Body of pancreas (tissue), 4 donors: ENCODE measurements at regions of chr3 and their contacts with region 1.

Region 1: GRCh38 chr3:42229942-42230688 is 35.9 kb downstream of the CCK start:
- DNase-seq: no peak
- ATAC-seq: no peak
- H3K4me3 ChIP-seq: no peak overlapping the region
- H3K27ac ChIP-seq: no peak overlapping the region
- H3K4me1 ChIP-seq: no peaks in the 10 kb centered on the region
- H3K27me3 ChIP-seq: no peaks in the 10 kb centered on the region
- CTCF ChIP-seq: peak in 6 of 7 experiments; percentile 21 to 58 (median 48)
- POLR2A ChIP-seq: no peak

Region 2: DNA sequence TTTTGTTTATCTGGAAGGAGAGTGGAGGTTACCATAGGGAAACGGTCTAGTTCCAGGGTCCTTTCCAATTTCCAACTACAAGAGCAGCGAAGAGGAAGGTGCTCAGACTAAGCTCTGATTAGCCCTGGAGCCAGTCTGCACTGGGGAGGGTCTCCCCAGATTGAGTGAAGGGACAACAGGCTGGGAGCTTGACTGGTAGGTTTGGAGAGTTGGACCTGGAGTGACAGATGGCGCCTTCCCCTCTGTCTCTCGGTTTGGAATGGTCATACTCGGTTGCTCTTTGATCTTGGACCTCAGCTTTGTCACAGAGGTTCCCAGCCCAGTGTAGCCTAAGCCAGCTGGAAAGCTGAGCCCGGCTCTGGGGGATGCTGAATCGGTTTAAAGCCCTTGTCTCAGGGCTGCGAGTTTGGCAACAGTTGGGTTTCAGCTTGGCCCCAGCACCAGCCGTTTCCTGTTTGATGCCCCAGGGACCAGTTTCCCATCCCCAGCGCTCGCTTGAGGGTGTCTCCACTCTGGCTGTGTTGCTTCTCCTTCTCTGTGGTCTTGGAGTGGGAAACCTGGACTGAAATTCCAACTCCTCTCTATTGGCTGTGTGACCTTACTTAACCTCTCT is 215.1 kb before region 1 on chr3:
- intact Hi-C with region 1: no loop called
- DNase-seq: peak; percentile 25 to 46 (median 40)
- ATAC-seq: no peak
- H3K4me3 ChIP-seq: no peak overlapping the region
- H3K27ac ChIP-seq: peak overlapping the region in 3 of 4 donors; percentile 70 to 91 (median 90)
- H3K4me1 ChIP-seq: peaks cover 35% of the 10 kb centered on the region
- H3K27me3 ChIP-seq: no peaks in the 10 kb centered on the region
- CTCF ChIP-seq: no peak
- POLR2A ChIP-seq: no peak

Region 3: DNA sequence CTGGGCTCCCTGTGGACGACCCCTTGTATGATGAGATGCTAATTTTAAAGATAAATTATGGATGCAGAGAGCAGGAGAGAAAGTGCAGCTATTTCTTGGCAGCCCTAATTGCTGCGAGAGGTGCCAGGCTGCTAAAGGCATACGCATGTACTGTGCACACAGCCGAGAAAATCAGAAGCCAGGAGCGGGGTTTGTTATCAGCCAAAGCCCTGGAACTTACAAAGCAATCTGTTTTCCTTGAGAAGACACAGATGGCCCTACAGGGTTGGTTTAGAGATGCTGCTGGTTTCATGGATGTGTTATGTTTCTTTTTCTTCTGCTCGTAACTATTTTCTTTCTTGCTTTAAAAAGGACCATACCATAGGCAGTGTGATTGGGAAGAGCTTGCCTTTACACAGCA is 47.6 kb after region 1 on chr3:
- intact Hi-C with region 1: no loop called
- DNase-seq: no peak
- ATAC-seq: no peak
- H3K4me3 ChIP-seq: no peak overlapping the region
- H3K27ac ChIP-seq: no peak overlapping the region
- H3K4me1 ChIP-seq: no peaks in the 10 kb centered on the region
- H3K27me3 ChIP-seq: no peaks in the 10 kb centered on the region
- CTCF ChIP-seq: no peak
- POLR2A ChIP-seq: no peak

Region 4: GRCh38 chr3:42300013-42300412 is 69.9 kb after region 1 on chr3:
- intact Hi-C with region 1: no loop called
- DNase-seq: peak in 3 of 4 donors; percentile 6 to 26 (median 20)
- ATAC-seq: no peak
- H3K4me3 ChIP-seq: no peak overlapping the region
- H3K27ac ChIP-seq: no peak overlapping the region
- H3K4me1 ChIP-seq: no peaks in the 10 kb centered on the region
- H3K27me3 ChIP-seq: no peaks in the 10 kb centered on the region
- CTCF ChIP-seq: no peak
- POLR2A ChIP-seq: no peak

Region 5: GRCh38 chr3:42443819-42444436 is 213.8 kb after region 1 on chr3:
- intact Hi-C with region 1: loop called (anchors 10 kb)
- DNase-seq: peak; percentile 80 to 85 (median 82)
- ATAC-seq: peak; percentile 90
- H3K4me3 ChIP-seq: no peak overlapping the region
- H3K27ac ChIP-seq: no peak overlapping the region
- H3K4me1 ChIP-seq: no peaks in the 10 kb centered on the region
- H3K27me3 ChIP-seq: no peaks in the 10 kb centered on the region
- CTCF ChIP-seq: peak; percentile 83 to 97 (median 94)
- POLR2A ChIP-seq: no peak

Region 6: GRCh38 chr3:42539869-42540714 is 310.0 kb after region 1 on chr3:
- intact Hi-C with region 1: loop called (anchors 10 kb)
- DNase-seq: peak; percentile 83 to 87 (median 85)
- ATAC-seq: peak; percentile 73
- H3K4me3 ChIP-seq: no peak overlapping the region
- H3K27ac ChIP-seq: no peak overlapping the region
- H3K4me1 ChIP-seq: peaks cover 34% of the 10 kb centered on the region
- H3K27me3 ChIP-seq: no peaks in the 10 kb centered on the region
- CTCF ChIP-seq: peak; percentile 63 to 86 (median 76)
- POLR2A ChIP-seq: no peak